CD4-positive, alpha-beta T cell (primary cell): ENCODE measurements at regions of chr4 and their contacts with region 1.

Region 1: DNA sequence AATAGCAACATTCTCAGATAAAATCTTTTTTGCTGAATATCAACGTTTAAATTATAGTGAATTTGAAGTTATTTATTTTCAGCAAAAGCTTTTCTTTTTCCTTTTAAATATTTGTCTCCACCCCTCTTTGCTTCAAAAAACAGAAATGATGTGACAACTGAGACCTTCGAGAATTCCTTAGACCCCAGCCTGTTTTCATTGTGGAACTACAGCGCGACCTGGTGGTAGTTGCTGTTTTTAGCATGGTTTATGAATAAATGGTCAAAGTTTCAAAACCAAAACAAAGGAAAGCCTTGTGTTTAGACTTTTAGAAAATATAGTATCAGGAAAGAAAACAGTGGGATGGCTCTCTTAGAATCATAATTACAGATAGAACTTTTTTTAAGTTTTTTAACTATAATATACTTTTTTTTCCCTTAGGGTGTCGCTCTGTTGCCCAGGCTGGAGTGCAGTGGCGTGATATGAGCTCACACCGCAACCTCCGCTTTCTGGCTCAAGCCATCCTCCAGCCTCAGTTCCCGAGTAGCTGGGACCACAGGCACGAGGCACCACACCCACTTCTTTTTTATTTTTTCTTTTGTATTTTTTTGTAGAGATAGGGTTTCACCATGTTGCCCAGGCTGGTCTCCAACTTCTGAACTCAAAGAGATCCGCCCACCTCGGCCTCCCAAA is 26.8 kb upstream of the TMEM184C start:
- DNase-seq: peak in 11 of 14 experiments; percentile 7 to 52 (median 25)
- ATAC-seq: no peak
- H3K4me3 ChIP-seq: no peak overlapping the region
- H3K4me3 Mint-ChIP-seq: no peak overlapping the region
- H3K27ac ChIP-seq: no peak overlapping the region
- H3K27ac Mint-ChIP-seq: no peak overlapping the region
- H3K4me1 ChIP-seq: peaks cover 6% of the 10 kb centered on the region
- H3K4me1 Mint-ChIP-seq: peaks cover 4% of the 10 kb centered on the region
- H3K27me3 ChIP-seq: peaks cover 0 to 8% of the 10 kb centered on the region in 2 experiments
- H3K27me3 Mint-ChIP-seq: no peaks in the 10 kb centered on the region
- CTCF ChIP-seq: peak; percentile 75

Region 2: GRCh38 chr4:146342600-146343192 is 1247.7 kb before region 1 on chr4:
- CTCF ChIA-PET with region 1: no interaction called
- POLR2A ChIA-PET with region 1: no interaction called
- intact Hi-C with region 1: loop called (anchors 5 to 10 kb)
- DNase-seq: peak in 8 of 14 experiments; percentile 0 to 59 (median 24)
- ATAC-seq: no peak
- H3K4me3 ChIP-seq: no peak overlapping the region
- H3K4me3 Mint-ChIP-seq: no peak overlapping the region
- H3K27ac ChIP-seq: no peak overlapping the region
- H3K27ac Mint-ChIP-seq: no peak overlapping the region
- H3K4me1 ChIP-seq: no peaks in the 10 kb centered on the region
- H3K4me1 Mint-ChIP-seq: peaks cover 5% of the 10 kb centered on the region
- H3K27me3 ChIP-seq: no peaks in the 10 kb centered on the region
- H3K27me3 Mint-ChIP-seq: no peaks in the 10 kb centered on the region
- CTCF ChIP-seq: peak; percentile 73

Region 3: GRCh38 chr4:147019061-147019460 is 571.3 kb before region 1 on chr4:
- CTCF ChIA-PET with region 1: no interaction called
- POLR2A ChIA-PET with region 1: no interaction called
- intact Hi-C with region 1: loop called (anchors 5 to 10 kb)
- DNase-seq: peak; percentile 6 to 63 (median 32)
- ATAC-seq: no peak
- H3K4me3 ChIP-seq: no peak overlapping the region
- H3K4me3 Mint-ChIP-seq: no peak overlapping the region
- H3K27ac ChIP-seq: no peak overlapping the region
- H3K27ac Mint-ChIP-seq: no peak overlapping the region
- H3K4me1 ChIP-seq: no peaks in the 10 kb centered on the region
- H3K4me1 Mint-ChIP-seq: no peaks in the 10 kb centered on the region
- H3K27me3 ChIP-seq: no peaks in the 10 kb centered on the region
- H3K27me3 Mint-ChIP-seq: peaks cover 5% of the 10 kb centered on the region
- CTCF ChIP-seq: peak; percentile 46

Region 4: DNA sequence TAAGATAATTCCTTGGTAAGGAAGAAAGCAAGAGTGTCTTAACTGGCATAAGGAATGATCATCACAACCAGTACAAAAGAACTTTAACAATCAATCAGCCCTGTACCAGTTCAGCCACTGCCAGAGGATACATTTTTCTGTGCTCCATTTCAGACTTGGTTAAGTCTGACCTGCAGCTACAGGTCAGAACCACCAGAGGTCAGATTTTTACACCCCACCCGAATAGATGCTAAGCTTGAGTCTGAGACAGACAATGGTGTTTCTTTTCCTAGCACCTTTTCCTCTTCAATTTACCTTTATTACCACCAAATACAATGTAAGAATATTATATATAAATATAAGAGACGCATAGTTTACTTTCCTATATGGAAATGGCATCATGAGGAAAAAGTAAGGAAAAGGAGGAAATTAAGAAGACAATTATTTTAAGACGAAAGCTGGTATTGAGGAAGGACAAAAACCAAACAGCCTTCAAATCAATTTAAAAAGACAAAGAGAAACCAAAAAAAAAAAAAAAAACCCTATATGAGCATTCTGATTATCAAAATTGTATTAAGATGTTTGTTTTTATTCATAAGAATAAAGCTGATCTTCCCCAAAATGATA is 429.4 kb before region 1 on chr4:
- CTCF ChIA-PET with region 1: no interaction called
- POLR2A ChIA-PET with region 1: no interaction called
- intact Hi-C with region 1: loop called in 1 of 2 experiments (anchors 10 kb)
- DNase-seq: peak in 3 of 14 experiments; percentile 5 to 19 (median 13)
- ATAC-seq: no peak
- H3K4me3 ChIP-seq: no peak overlapping the region
- H3K4me3 Mint-ChIP-seq: no peak overlapping the region
- H3K27ac ChIP-seq: no peak overlapping the region
- H3K27ac Mint-ChIP-seq: no peak overlapping the region
- H3K4me1 ChIP-seq: no peaks in the 10 kb centered on the region
- H3K4me1 Mint-ChIP-seq: no peaks in the 10 kb centered on the region
- H3K27me3 ChIP-seq: peaks cover 11 to 23% of the 10 kb centered on the region in 2 experiments
- H3K27me3 Mint-ChIP-seq: peaks cover 37% of the 10 kb centered on the region
- CTCF ChIP-seq: peak; percentile 44

Region 5: GRCh38 chr4:147629783-147630730 is 39.7 kb after region 1 on chr4:
- CTCF ChIA-PET with region 1: no interaction called
- POLR2A ChIA-PET with region 1: no interaction called
- intact Hi-C with region 1: no loop called
- DNase-seq: no peak
- ATAC-seq: no peak
- H3K4me3 ChIP-seq: no peak overlapping the region
- H3K4me3 Mint-ChIP-seq: no peak overlapping the region
- H3K27ac ChIP-seq: no peak overlapping the region
- H3K27ac Mint-ChIP-seq: no peak overlapping the region
- H3K4me1 ChIP-seq: no peaks in the 10 kb centered on the region
- H3K4me1 Mint-ChIP-seq: peaks cover 10% of the 10 kb centered on the region
- H3K27me3 ChIP-seq: no peaks in the 10 kb centered on the region
- H3K27me3 Mint-ChIP-seq: no peaks in the 10 kb centered on the region
- CTCF ChIP-seq: no peak